ENCODE measurements at regions of chr15 and their contacts with region 1.

Region 1: GRCh38 chr15:78108299-78109084 is 16.1 kb downstream of the SH2D7 start:
- DNase-seq: peak; percentile 90
- ATAC-seq: peak; percentile 69
- H3K4me3 Mint-ChIP-seq: no peak overlapping the region
- H3K27ac Mint-ChIP-seq: no peak overlapping the region
- H3K4me1 Mint-ChIP-seq: peaks cover 42% of the 10 kb centered on the region
- H3K27me3 Mint-ChIP-seq: no peaks in the 10 kb centered on the region
- CTCF ChIP-seq: peak; percentile 90

Region 2: GRCh38 chr15:77870195-77871065 is 238.1 kb before region 1 on chr15:
- CTCF ChIA-PET with region 1: no interaction called
- POLR2A ChIA-PET with region 1: no interaction called
- intact Hi-C with region 1: no loop called
- DNase-seq: peak; percentile 64
- ATAC-seq: peak; percentile 80
- H3K4me3 Mint-ChIP-seq: no peak overlapping the region
- H3K27ac Mint-ChIP-seq: no peak overlapping the region
- H3K4me1 Mint-ChIP-seq: no peaks in the 10 kb centered on the region
- H3K27me3 Mint-ChIP-seq: no peaks in the 10 kb centered on the region
- CTCF ChIP-seq: peak; percentile 88

Region 3: GRCh38 chr15:77907824-77908751 is 200.4 kb before region 1 on chr15:
- CTCF ChIA-PET with region 1: interaction called, 12 read pairs
- POLR2A ChIA-PET with region 1: no interaction called
- intact Hi-C with region 1: no loop called
- DNase-seq: peak; percentile 76
- ATAC-seq: peak; percentile 77
- H3K4me3 Mint-ChIP-seq: no peak overlapping the region
- H3K27ac Mint-ChIP-seq: no peak overlapping the region
- H3K4me1 Mint-ChIP-seq: peaks cover 2% of the 10 kb centered on the region
- H3K27me3 Mint-ChIP-seq: no peaks in the 10 kb centered on the region
- CTCF ChIP-seq: peak; percentile 38

Region 4: GRCh38 chr15:78000091-78000926 is 108.2 kb before region 1 on chr15:
- CTCF ChIA-PET with region 1: interaction called, 55 read pairs
- POLR2A ChIA-PET with region 1: interaction called, 5 read pairs
- intact Hi-C with region 1: loop called (anchors 5 kb)
- DNase-seq: peak; percentile 88
- ATAC-seq: peak; percentile 99
- H3K4me3 Mint-ChIP-seq: no peak overlapping the region
- H3K27ac Mint-ChIP-seq: peak overlapping the region; percentile 48
- H3K4me1 Mint-ChIP-seq: peaks cover 16% of the 10 kb centered on the region
- H3K27me3 Mint-ChIP-seq: no peaks in the 10 kb centered on the region
- CTCF ChIP-seq: peak; percentile 70

Region 5: GRCh38 chr15:78040653-78041244 is 67.7 kb before region 1 on chr15:
- CTCF ChIA-PET with region 1: interaction called, 38 read pairs
- POLR2A ChIA-PET with region 1: interaction called, 3 read pairs
- intact Hi-C with region 1: no loop called
- DNase-seq: no peak
- ATAC-seq: no peak
- H3K4me3 Mint-ChIP-seq: no peak overlapping the region
- H3K27ac Mint-ChIP-seq: peak overlapping the region; percentile 86
- H3K4me1 Mint-ChIP-seq: peaks cover 92% of the 10 kb centered on the region
- H3K27me3 Mint-ChIP-seq: no peaks in the 10 kb centered on the region
- CTCF ChIP-seq: no peak

Region 6: GRCh38 chr15:78065284-78065872 is 43.1 kb before region 1 on chr15:
- CTCF ChIA-PET with region 1: interaction called, 12 read pairs
- POLR2A ChIA-PET with region 1: interaction called, 3 read pairs
- intact Hi-C with region 1: no loop called
- DNase-seq: no peak
- ATAC-seq: no peak
- H3K4me3 Mint-ChIP-seq: no peak overlapping the region
- H3K27ac Mint-ChIP-seq: no peak overlapping the region
- H3K4me1 Mint-ChIP-seq: peaks cover 11% of the 10 kb centered on the region
- H3K27me3 Mint-ChIP-seq: no peaks in the 10 kb centered on the region
- CTCF ChIP-seq: no peak

Region 7: GRCh38 chr15:78093242-78094020 is 15.1 kb before region 1 on chr15:
- CTCF ChIA-PET with region 1: interaction called, 11 read pairs
- POLR2A ChIA-PET with region 1: interaction called, 9 read pairs
- intact Hi-C with region 1: no loop called
- DNase-seq: peak; percentile 2
- ATAC-seq: no peak
- H3K4me3 Mint-ChIP-seq: no peak overlapping the region
- H3K27ac Mint-ChIP-seq: no peak overlapping the region
- H3K4me1 Mint-ChIP-seq: peaks cover 4% of the 10 kb centered on the region
- H3K27me3 Mint-ChIP-seq: no peaks in the 10 kb centered on the region
- CTCF ChIP-seq: no peak

Region 8: GRCh38 chr15:78195735-78196201 is 87.3 kb after region 1 on chr15:
- CTCF ChIA-PET with region 1: interaction called, 102 read pairs
- POLR2A ChIA-PET with region 1: interaction called, 3 read pairs
- intact Hi-C with region 1: loop called (anchors 1 kb)
- DNase-seq: peak; percentile 52
- ATAC-seq: peak; percentile 94
- H3K4me3 Mint-ChIP-seq: no peak overlapping the region
- H3K27ac Mint-ChIP-seq: no peak overlapping the region
- H3K4me1 Mint-ChIP-seq: no peaks in the 10 kb centered on the region
- H3K27me3 Mint-ChIP-seq: no peaks in the 10 kb centered on the region
- CTCF ChIP-seq: peak; percentile 89

Region 9: DNA sequence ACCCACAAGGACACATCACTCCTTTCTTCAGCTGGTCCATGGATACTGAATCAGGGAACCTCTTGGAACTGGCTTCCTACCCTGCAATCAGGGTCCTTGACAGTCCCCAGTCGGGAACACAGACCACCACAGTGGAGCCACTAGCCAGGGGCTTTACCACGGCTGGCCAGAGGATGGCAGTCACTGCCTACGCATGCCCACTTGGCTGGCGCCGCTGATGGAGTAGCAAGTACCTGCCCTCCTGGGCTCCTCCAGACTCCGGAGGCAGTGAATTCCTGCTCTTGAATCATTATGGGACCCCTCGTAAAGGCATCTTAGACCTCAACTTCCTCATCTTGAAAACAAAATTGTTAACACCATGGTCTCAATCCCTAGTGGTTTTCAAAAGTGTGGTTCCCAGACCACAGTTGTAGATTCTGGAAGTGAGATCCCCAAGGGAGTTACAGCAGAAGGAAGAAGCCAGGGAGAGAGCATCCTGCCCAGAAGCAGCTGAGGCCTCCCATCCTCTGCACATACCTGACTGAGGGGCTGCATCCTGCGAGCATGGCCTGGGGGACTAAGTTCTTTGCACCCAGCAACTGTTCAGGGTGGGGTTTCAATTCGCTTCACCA is 200.0 kb after region 1 on chr15:
- CTCF ChIA-PET with region 1: no interaction called
- POLR2A ChIA-PET with region 1: no interaction called
- intact Hi-C with region 1: no loop called
- DNase-seq: peak; percentile 80
- ATAC-seq: peak; percentile 98
- H3K4me3 Mint-ChIP-seq: no peak overlapping the region
- H3K27ac Mint-ChIP-seq: no peak overlapping the region
- H3K4me1 Mint-ChIP-seq: no peaks in the 10 kb centered on the region
- H3K27me3 Mint-ChIP-seq: peaks cover 5% of the 10 kb centered on the region
- CTCF ChIP-seq: peak; percentile 74

Measured in activated CD8-positive, alpha-beta T cell treated with anti-CD3 and anti-CD28 coated beads for 36 hours (primary cell).